ENCODE measurements at regions of chr12 and their contacts with region 1.

Region 1: GRCh38 chr12:119115296-119115905 is 63.3 kb upstream of the HSPB8 start:
- DNase-seq: peak in 2 of 5 donors; percentile 35
- ATAC-seq: peak in 3 of 4 donors; percentile 31 to 57 (median 37)
- H3K4me3 ChIP-seq: no peak overlapping the region
- H3K27ac ChIP-seq: no peak overlapping the region
- H3K4me1 ChIP-seq: peaks cover 0 to 3% (median 0%) of the 10 kb centered on the region in 12 donors
- H3K27me3 ChIP-seq: peaks cover 0 to 4% (median 0%) of the 10 kb centered on the region in 9 donors
- CTCF ChIP-seq: peak; percentile 82 to 97 (median 93)
- POLR2A ChIP-seq: no peak

Region 2: DNA sequence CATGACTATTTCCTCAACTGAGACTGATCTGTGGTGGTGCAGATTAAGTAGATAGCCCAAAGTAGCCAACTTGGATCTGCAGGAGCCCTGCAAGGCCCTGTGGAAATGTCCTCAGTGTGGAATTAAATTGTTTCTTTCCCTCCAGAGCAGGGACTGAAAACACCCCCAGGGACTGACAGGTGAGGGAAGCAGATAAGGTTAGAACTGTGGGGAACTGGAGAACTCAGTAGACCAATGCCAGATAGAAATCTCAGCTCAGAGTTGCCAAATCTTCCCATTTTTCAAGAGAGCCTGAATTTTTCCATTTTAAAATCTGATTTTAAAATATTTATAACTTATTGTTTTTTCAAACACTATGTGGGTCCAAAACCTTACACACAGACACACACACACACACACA is 48.8 kb after region 1 on chr12:
- intact Hi-C with region 1: no loop called
- DNase-seq: no peak
- ATAC-seq: no peak
- H3K4me3 ChIP-seq: no peak overlapping the region
- H3K27ac ChIP-seq: no peak overlapping the region
- H3K4me1 ChIP-seq: peaks cover 0 to 15% (median 2%) of the 10 kb centered on the region in 12 donors
- H3K27me3 ChIP-seq: no peaks in the 10 kb centered on the region
- CTCF ChIP-seq: no peak
- POLR2A ChIP-seq: no peak

Region 3: GRCh38 chr12:119258149-119258548 is 142.7 kb after region 1 on chr12:
- intact Hi-C with region 1: loop called in 1 of 10 experiments (anchors 10 kb)
- DNase-seq: peak in 1 of 5 donors; percentile 27
- ATAC-seq: peak in 3 of 4 donors; percentile 27 to 86 (median 34)
- H3K4me3 ChIP-seq: no peak overlapping the region
- H3K27ac ChIP-seq: no peak overlapping the region
- H3K4me1 ChIP-seq: peaks cover 0 to 13% (median 0%) of the 10 kb centered on the region in 12 donors
- H3K27me3 ChIP-seq: no peaks in the 10 kb centered on the region
- CTCF ChIP-seq: no peak
- POLR2A ChIP-seq: no peak

Region 4: DNA sequence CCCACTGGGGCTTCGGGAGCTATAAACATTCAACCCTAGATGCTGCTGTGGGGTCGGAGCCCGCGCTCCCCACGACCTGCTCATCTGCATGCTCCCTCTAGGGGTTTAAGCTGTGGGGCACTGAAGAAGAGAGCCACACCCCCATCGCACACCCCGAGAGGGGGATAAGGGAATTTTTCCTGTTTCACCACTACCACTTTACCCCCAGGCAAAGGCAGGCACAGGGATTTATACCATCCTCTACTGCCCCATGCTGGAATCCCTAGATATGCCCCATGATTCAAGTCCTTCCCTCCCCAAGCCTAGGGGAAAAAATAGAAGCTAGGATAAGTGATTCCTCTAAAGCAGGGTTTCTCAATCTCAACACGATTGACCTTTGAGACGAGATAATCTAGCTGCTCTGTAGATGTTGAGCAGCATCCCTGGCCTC is 159.2 kb after region 1 on chr12:
- intact Hi-C with region 1: loop called in 7 of 10 experiments (anchors 5 to 10 kb)
- DNase-seq: no peak
- ATAC-seq: peak; percentile 58 to 94 (median 88)
- H3K4me3 ChIP-seq: no peak overlapping the region
- H3K27ac ChIP-seq: no peak overlapping the region
- H3K4me1 ChIP-seq: peaks cover 0 to 5% (median 0%) of the 10 kb centered on the region in 12 donors
- H3K27me3 ChIP-seq: no peaks in the 10 kb centered on the region
- CTCF ChIP-seq: peak in 9 of 12 donors; percentile 11 to 45 (median 28)
- POLR2A ChIP-seq: no peak

Region 5: DNA sequence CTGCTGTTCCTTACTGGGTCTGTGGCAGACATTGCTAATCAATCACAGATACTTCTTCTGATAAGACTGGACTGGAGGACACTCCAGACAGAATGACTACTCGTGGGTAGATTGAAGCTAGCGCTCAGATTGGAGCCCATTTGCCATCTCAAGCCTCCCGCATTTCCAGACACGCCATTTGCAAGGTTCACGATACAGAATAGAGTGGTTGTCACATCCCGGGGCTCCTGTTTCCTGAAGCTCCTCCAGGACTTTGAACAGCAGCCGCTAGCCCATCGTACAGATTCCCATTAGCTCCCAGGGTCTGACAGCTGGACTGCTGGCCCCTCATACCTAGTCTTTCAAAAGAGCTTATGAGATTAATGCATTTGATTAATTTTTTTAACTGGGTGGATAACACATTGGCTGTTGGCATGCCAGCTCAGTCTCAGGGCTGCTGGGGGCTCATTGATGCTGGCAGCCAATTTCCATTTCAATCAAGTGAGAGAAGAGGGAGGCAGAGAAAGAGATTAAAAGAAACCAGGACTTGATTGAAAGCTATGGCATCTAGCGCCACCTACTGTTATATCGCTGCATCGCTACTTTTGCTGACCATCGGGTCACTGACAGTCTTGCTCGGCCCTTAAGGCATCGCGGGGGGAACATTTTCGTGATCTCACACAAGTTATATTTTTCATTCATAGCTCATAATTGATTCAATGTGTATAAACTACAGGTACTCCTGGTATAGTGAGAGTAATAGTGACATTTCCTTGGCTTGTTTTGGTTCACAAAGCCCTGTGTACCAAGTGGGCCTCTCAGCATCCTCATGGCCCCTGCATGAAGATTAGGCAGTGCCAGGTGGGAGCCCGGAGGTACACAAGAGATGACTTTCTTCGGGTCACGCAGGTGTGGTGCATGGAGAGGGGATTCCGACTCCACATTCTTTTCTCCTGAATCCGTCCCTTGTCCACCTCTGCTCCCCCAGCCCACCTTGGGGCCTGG is 297.7 kb after region 1 on chr12:
- intact Hi-C with region 1: loop called (anchors 1 to 5 kb)
- DNase-seq: peak in 4 of 5 donors; percentile 53 to 67 (median 58)
- ATAC-seq: peak in 3 of 4 donors; percentile 42 to 73 (median 58)
- H3K4me3 ChIP-seq: no peak overlapping the region
- H3K27ac ChIP-seq: no peak overlapping the region
- H3K4me1 ChIP-seq: peaks cover 0 to 6% (median 0%) of the 10 kb centered on the region in 12 donors
- H3K27me3 ChIP-seq: no peaks in the 10 kb centered on the region
- CTCF ChIP-seq: peak; percentile 82 to 93 (median 90)
- POLR2A ChIP-seq: no peak

Region 6: DNA sequence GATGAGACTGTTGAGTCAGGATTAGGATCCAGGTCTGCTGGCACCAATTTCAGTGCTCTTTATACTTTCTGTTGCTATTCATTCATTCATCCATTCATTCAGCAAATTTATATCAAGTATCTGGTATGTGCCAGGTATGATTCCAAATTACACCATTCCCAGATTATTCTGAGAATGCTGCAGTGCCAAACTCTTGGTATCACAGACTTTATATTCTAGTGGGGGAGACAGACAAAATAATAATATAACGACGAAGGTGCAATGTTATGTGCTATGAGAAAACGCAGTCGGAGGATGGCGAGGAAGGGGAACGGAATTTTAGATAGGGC is 1322.0 kb after region 1 on chr12:
- intact Hi-C with region 1: no loop called
- DNase-seq: no peak
- ATAC-seq: no peak
- H3K4me3 ChIP-seq: peak overlapping the region; percentile 62 to 97 (median 83)
- H3K27ac ChIP-seq: peak overlapping the region; percentile 11 to 92 (median 88)
- H3K4me1 ChIP-seq: peaks cover 0 to 22% (median 16%) of the 10 kb centered on the region in 12 donors
- H3K27me3 ChIP-seq: no peaks in the 10 kb centered on the region
- CTCF ChIP-seq: no peak
- POLR2A ChIP-seq: no peak

Measured in heart left ventricle (tissue), 16 donors.